A673 (cell line): ENCODE measurements at regions of chr1 and their contacts with region 1.

Region 1: GRCh38 chr1:209945377-209945776 is 7.4 kb downstream of the SYT14 start:
- DNase-seq: no peak
- H3K4me3 ChIP-seq: no peak overlapping the region
- H3K27ac ChIP-seq: no peak overlapping the region
- H3K4me1 ChIP-seq: peaks cover 53% of the 10 kb centered on the region
- H3K27me3 ChIP-seq: no peaks in the 10 kb centered on the region
- CTCF ChIP-seq: no peak

Region 2: GRCh38 chr1:208461680-208462079 is 1483.7 kb before region 1 on chr1:
- CTCF ChIA-PET with region 1: no interaction called
- POLR2A ChIA-PET with region 1: no interaction called
- intact Hi-C with region 1: no loop called
- DNase-seq: no peak
- H3K4me3 ChIP-seq: no peak overlapping the region
- H3K27ac ChIP-seq: no peak overlapping the region
- H3K4me1 ChIP-seq: no peaks in the 10 kb centered on the region
- H3K27me3 ChIP-seq: no peaks in the 10 kb centered on the region
- CTCF ChIP-seq: peak; percentile 36

Region 3: GRCh38 chr1:209983953-209984352 is 38.6 kb after region 1 on chr1:
- CTCF ChIA-PET with region 1: no interaction called
- POLR2A ChIA-PET with region 1: no interaction called
- intact Hi-C with region 1: loop called (anchors 5 kb)
- DNase-seq: no peak
- H3K4me3 ChIP-seq: no peak overlapping the region
- H3K27ac ChIP-seq: no peak overlapping the region
- H3K4me1 ChIP-seq: peaks cover 10% of the 10 kb centered on the region
- H3K27me3 ChIP-seq: no peaks in the 10 kb centered on the region
- CTCF ChIP-seq: no peak